PC-3 (cell line): ENCODE measurements at regions of chr11 and their contacts with region 1.

Region 1: DNA sequence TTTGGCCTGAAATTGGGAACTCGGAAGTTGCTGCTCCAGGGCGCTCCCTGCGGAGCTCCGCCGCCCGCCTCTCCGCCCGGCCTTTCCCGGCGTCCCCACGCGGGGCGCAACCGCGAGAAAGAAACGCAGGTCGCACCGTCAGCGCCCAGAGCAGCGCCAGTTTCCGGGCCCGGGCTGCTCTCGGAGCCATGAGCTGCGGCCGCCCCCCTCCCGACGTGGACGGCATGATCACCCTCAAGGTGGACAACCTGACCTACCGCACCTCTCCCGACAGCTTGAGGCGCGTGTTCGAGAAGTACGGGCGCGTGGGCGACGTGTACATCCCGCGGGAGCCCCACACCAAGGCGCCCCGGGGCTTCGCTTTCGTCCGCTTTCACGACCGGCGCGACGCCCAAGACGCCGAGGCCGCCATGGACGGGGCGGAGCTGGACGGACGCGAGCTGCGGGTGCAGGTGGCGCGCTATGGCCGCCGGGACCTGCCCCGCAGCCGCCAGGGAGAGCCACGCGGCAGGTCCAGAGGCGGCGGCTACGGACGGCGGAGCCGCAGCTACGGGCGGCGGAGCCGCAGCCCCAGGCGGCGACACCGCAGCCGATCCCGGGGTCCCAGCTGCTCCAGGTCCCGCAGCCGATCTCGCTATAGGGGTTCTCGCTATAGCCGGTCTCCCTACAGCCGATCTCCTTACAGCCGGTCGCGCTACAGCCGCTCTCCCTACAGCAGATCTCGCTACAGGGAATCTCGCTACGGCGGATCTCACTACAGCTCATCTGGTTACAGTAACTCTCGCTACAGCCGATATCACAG is 521 bp downstream of the SRSF8 start:
- DNase-seq: peak; percentile 87
- ATAC-seq: peak; percentile 72
- H3K4me3 ChIP-seq: peak overlapping the region; percentile 82
- H3K27ac ChIP-seq: peak overlapping the region; percentile 67
- H3K4me1 ChIP-seq: peaks cover 13% of the 10 kb centered on the region
- H3K27me3 ChIP-seq: peaks cover 1% of the 10 kb centered on the region; the same call in 1 of the 2 replicates
- CTCF ChIP-seq: peak; percentile 46; the same call in 1 of the 2 replicates

Region 2: GRCh38 chr11:94623120-94623735 is 444.0 kb before region 1 on chr11:
- CTCF ChIA-PET with region 1: no interaction called
- POLR2A ChIA-PET with region 1: no interaction called
- intact Hi-C with region 1: loop called (anchors 2 kb)
- DNase-seq: peak; percentile 95
- ATAC-seq: peak; percentile 96
- H3K4me3 ChIP-seq: no peak overlapping the region
- H3K27ac ChIP-seq: no peak overlapping the region
- H3K4me1 ChIP-seq: peaks cover 4% of the 10 kb centered on the region; the same call in 1 of the 2 replicates
- H3K27me3 ChIP-seq: no peaks in the 10 kb centered on the region
- CTCF ChIP-seq: peak; percentile 99

Region 3: GRCh38 chr11:94973099-94973968 is 93.9 kb before region 1 on chr11 and contains the starts of genes CWC15 and KDM4D:
- CTCF ChIA-PET with region 1: interaction called, 7 read pairs
- POLR2A ChIA-PET with region 1: interaction called, 3 read pairs
- intact Hi-C with region 1: loop called (anchors 2 kb)
- DNase-seq: peak; percentile 98
- ATAC-seq: peak; percentile 99
- H3K4me3 ChIP-seq: peak within 1 kb of the TSS; percentile 83
- H3K27ac ChIP-seq: peak within 1 kb of the TSS; percentile 13; the same call in 1 of the 2 replicates
- H3K4me1 ChIP-seq: peaks cover 21% of the 10 kb centered on the region
- H3K27me3 ChIP-seq: no peaks in the 10 kb centered on the region
- CTCF ChIP-seq: no peak
- total RNA-seq, gene CWC15: 56.9 and 63.5 TPM in 2 replicates
- total RNA-seq, gene KDM4D: 2.7 and 4.1 TPM in 2 replicates

Region 4: GRCh38 chr11:95108159-95108611 is 40.9 kb after region 1 on chr11:
- CTCF ChIA-PET with region 1: interaction called, 3 read pairs
- POLR2A ChIA-PET with region 1: no interaction called
- intact Hi-C with region 1: loop called (anchors 1 kb)
- DNase-seq: peak; percentile 90
- ATAC-seq: peak; percentile 93
- H3K4me3 ChIP-seq: peak overlapping the region; percentile 58
- H3K27ac ChIP-seq: peak overlapping the region; percentile 84
- H3K4me1 ChIP-seq: peaks cover 30% of the 10 kb centered on the region
- H3K27me3 ChIP-seq: no peaks in the 10 kb centered on the region
- CTCF ChIP-seq: no peak

Region 5: DNA sequence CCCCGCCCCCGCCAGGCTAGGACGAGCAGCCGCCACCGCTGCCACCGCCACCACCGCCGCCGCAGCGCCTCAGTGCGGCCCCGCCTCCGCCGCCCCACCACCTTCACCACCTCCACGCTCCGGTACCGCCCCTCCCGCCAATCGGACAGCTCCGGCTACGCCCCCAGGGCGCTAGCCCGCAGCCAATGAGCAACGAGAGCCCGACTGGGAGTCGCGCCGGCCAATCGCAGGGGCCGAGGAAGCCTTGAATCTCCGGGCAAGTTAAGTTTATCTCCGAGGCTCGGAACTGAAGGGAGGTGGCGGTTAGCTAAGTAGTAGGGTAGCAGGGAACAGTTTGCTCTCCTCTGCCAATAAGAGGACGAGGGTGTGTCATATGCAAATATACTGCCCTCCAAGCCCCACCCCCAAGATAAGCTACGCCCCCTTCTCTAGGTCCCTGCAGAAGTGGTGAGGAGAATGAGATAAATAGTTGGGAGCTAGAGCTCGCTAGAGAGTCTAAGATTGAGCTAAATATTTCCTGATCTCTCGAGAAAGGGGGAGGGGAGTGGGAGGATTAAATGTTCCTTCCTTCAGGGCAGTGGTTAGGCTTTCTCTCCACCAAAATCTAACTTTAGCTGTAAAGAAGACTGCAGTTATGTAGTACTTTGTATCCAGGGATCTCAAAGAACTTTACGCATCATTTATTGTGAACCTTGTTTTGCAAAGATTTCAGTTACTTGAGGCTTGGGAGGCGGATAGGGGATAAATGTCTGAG is 164.1 kb after region 1 on chr11 and contains the start of gene SESN3:
- CTCF ChIA-PET with region 1: no interaction called
- POLR2A ChIA-PET with region 1: interaction called, 5 read pairs
- intact Hi-C with region 1: loop called (anchors 10 kb)
- DNase-seq: peak; percentile 96
- ATAC-seq: peak; percentile 92
- H3K4me3 ChIP-seq: peak within 1 kb of the TSS; percentile 68
- H3K27ac ChIP-seq: no peak within 1 kb of the TSS
- H3K4me1 ChIP-seq: 0 out of 2 replicates have a peak, but pooled peaks cover 10% of the 10 kb centered on the region
- H3K27me3 ChIP-seq: peaks cover 63% of the 10 kb centered on the region
- CTCF ChIP-seq: no peak
- total RNA-seq, gene SESN3: 0.23 and 0.55 TPM in 2 replicates

Region 6: DNA sequence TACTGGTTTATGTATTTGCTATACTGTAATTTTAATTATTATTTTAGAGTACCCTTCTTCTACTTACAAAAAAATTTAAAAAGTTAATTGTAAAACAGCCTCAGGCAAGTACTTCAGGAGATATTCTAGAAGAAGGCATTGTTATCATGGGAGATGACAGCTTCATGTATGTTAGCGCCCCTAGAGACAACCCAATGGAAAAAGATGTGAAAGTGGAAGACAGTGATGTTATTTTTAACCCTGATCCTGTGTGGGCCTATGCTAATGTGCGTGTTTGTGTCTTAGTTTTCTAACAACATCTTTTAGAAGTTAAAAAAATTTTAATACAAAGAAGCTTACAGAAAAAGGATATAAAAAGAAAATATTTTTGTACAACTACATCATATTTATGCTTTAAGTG is 517.3 kb after region 1 on chr11:
- CTCF ChIA-PET with region 1: no interaction called
- POLR2A ChIA-PET with region 1: no interaction called
- intact Hi-C with region 1: no loop called
- DNase-seq: no peak
- ATAC-seq: no peak
- H3K4me3 ChIP-seq: no peak overlapping the region
- H3K27ac ChIP-seq: no peak overlapping the region
- H3K4me1 ChIP-seq: no peaks in the 10 kb centered on the region
- H3K27me3 ChIP-seq: peaks cover 5% of the 10 kb centered on the region
- CTCF ChIP-seq: peak; percentile 41; the same call in 1 of the 2 replicates

Region 7: GRCh38 chr11:95764267-95764898 is 697.1 kb after region 1 on chr11:
- CTCF ChIA-PET with region 1: no interaction called
- POLR2A ChIA-PET with region 1: no interaction called
- intact Hi-C with region 1: loop called (anchors 2 kb)
- DNase-seq: peak; percentile 76
- ATAC-seq: peak; percentile 85
- H3K4me3 ChIP-seq: no peak overlapping the region
- H3K27ac ChIP-seq: no peak overlapping the region
- H3K4me1 ChIP-seq: no peaks in the 10 kb centered on the region
- H3K27me3 ChIP-seq: peaks cover 23% of the 10 kb centered on the region
- CTCF ChIP-seq: peak; percentile 86

Region 8: GRCh38 chr11:95867105-95867504 is 799.9 kb after region 1 on chr11:
- CTCF ChIA-PET with region 1: no interaction called
- POLR2A ChIA-PET with region 1: no interaction called
- intact Hi-C with region 1: no loop called
- DNase-seq: no peak
- ATAC-seq: no peak
- H3K4me3 ChIP-seq: no peak overlapping the region
- H3K27ac ChIP-seq: no peak overlapping the region
- H3K4me1 ChIP-seq: no peaks in the 10 kb centered on the region
- H3K27me3 ChIP-seq: no peaks in the 10 kb centered on the region
- CTCF ChIP-seq: no peak